CD4-positive, alpha-beta T cell (primary cell): ENCODE measurements at regions of chr3 and their contacts with region 1.

Region 1: DNA sequence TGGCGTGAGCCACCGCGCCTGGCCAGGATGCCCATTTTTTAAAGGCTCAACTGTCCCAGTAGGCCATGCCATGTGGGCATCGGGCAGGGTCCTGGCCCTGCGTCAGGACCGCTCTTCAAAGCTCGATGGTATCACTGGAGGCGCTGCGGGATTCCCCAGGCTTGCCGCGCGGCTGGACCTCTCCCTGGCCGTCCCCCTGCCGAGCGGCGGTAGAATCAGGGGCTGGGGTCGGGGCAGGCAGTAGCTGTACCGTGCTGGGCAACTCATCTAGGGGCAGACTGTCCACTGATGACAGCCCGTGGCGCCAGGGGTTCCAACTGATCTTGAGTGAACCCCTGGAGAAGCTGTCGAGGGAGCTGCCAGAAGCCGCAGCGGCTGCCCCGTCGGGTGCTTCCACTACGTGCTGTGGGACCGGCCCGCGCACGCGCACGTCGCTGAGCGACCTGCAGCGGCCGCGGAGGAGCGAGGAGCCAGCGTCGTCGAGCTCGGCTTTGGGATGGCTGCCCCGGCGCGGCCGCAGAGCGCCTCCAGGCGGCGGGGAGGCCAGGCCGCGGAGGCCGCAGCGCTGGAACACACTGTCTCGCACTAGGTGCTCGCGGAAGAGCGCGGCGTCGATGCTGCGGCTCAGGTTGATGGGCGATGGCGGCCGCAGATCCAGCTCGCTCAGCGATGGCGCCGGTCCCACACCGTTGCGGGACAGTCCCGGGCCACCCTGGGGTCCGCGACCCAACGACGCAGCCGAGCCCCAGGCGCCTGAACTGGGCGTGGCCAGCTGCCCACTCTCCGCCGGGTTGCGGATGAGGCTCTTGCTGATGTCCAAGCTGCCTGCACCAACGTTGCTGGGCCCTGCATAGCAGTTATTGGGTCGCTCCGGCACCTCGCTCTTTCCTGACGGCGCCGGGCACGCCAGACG is 5.8 kb downstream of the PRRT3 start:
- DNase-seq: peak; percentile 65 to 91 (median 78)
- ATAC-seq: peak; percentile 93
- H3K4me3 ChIP-seq: peak overlapping the region; percentile 59
- H3K4me3 Mint-ChIP-seq: peak overlapping the region; percentile 62
- H3K27ac ChIP-seq: peak overlapping the region; percentile 47 to 55
- H3K27ac Mint-ChIP-seq: peak overlapping the region; percentile 70
- H3K4me1 ChIP-seq: peaks cover 16% of the 10 kb centered on the region
- H3K4me1 Mint-ChIP-seq: peaks cover 7% of the 10 kb centered on the region
- H3K27me3 ChIP-seq: no peaks in the 10 kb centered on the region
- H3K27me3 Mint-ChIP-seq: no peaks in the 10 kb centered on the region
- CTCF ChIP-seq: peak; percentile 34

Region 2: DNA sequence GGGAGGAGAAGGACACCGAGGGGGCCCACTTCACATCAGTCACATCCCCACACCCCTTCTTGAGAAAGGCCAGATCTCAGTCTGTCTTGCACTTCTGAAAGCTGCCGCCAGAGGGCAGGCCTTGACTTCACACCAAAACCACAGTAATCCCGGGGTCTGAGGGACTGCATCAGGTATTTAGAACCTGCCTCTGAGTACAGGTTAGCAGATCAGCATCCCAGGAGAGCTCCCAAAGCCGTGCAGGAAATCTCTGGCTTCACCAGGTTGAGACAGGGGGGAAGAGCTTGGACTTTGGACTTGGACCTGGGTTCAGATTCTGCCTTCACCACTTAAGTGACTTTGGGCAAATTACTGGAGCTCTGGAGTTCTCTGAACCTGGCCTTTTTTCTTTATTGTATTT is 443.1 kb before region 1 on chr3:
- CTCF ChIA-PET with region 1: no interaction called
- POLR2A ChIA-PET with region 1: no interaction called
- intact Hi-C with region 1: loop called in 1 of 2 experiments (anchors 5 kb)
- DNase-seq: peak; percentile 48 to 79 (median 62)
- ATAC-seq: peak; percentile 58
- H3K4me3 ChIP-seq: no peak overlapping the region
- H3K4me3 Mint-ChIP-seq: no peak overlapping the region
- H3K27ac ChIP-seq: no peak overlapping the region
- H3K27ac Mint-ChIP-seq: no peak overlapping the region
- H3K4me1 ChIP-seq: peaks cover 11% of the 10 kb centered on the region
- H3K4me1 Mint-ChIP-seq: no peaks in the 10 kb centered on the region
- H3K27me3 ChIP-seq: peaks cover 34% of the 10 kb centered on the region in 2 experiments
- H3K27me3 Mint-ChIP-seq: peaks cover 48% of the 10 kb centered on the region
- CTCF ChIP-seq: peak; percentile 81

Region 3: DNA sequence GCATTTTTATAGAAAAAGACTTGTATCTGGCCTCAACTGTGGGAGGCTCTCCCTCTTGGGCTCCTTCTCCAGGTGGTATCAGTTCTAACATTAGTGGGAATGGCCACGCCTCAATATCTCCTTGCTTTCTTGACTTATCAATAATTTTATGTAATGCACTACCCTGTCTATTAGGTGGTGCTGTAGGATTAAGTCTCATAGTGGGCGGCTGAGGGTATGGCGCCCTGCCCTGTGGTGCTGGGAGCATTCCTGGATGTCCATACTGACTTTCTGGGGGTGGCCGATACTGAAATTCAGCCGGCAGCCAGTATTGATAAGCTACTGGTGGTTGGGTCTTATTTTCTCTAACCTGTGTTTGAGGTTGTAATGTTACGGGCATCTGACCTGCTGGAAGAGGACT is 93.8 kb before region 1 on chr3:
- CTCF ChIA-PET with region 1: no interaction called
- POLR2A ChIA-PET with region 1: no interaction called
- intact Hi-C with region 1: loop called in 1 of 2 experiments (anchors 5 kb)
- DNase-seq: no peak
- ATAC-seq: no peak
- H3K4me3 ChIP-seq: no peak overlapping the region
- H3K4me3 Mint-ChIP-seq: no peak overlapping the region
- H3K27ac ChIP-seq: no peak overlapping the region
- H3K27ac Mint-ChIP-seq: no peak overlapping the region
- H3K4me1 ChIP-seq: no peaks in the 10 kb centered on the region
- H3K4me1 Mint-ChIP-seq: peaks cover 4% of the 10 kb centered on the region
- H3K27me3 ChIP-seq: no peaks in the 10 kb centered on the region
- H3K27me3 Mint-ChIP-seq: peaks cover 5% of the 10 kb centered on the region
- CTCF ChIP-seq: no peak